ENCODE measurements at regions of chr14 and their contacts with region 1.

Region 1: GRCh38 chr14:32076278-32077080 is 625 bp upstream of the ARHGAP5 start:
- DNase-seq: peak; percentile 73
- ATAC-seq: peak; percentile 91
- H3K4me3 ChIP-seq: peak overlapping the region; percentile 79 to 91
- H3K27ac ChIP-seq: peak overlapping the region; percentile 97
- H3K4me1 ChIP-seq: peaks cover 12% of the 10 kb centered on the region; the same call in 1 of the 2 replicates
- H3K27me3 ChIP-seq: no peaks in the 10 kb centered on the region
- CTCF ChIP-seq: no peak

Region 2: DNA sequence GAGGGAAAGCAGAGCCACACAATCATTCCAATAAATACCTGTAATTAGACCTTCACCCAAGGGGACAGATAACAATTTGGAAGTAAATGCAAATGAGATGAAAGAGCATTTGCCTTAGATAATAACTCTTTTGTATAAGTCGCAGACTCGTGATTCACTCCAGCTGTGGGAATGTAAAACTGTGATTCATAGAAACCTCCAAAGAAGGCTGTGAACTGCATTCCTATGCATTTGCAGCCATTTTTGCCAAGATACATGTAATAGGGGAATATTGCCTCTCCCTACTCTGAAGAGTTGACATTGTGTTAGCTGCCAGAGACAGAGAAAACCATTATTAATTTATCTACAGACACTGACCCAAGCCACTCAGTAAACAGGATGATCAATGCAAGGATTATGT is 181.3 kb before region 1 on chr14:
- CTCF ChIA-PET with region 1: no interaction called
- POLR2A ChIA-PET with region 1: no interaction called
- in situ Hi-C with region 1: no loop called
- intact Hi-C with region 1: no loop called
- DNase-seq: no peak
- ATAC-seq: no peak
- H3K4me3 ChIP-seq: no peak overlapping the region
- H3K27ac ChIP-seq: no peak overlapping the region
- H3K4me1 ChIP-seq: no peaks in the 10 kb centered on the region
- H3K27me3 ChIP-seq: no peaks in the 10 kb centered on the region
- CTCF ChIP-seq: no peak

Region 3: GRCh38 chr14:31937721-31938346 is 138.6 kb before region 1 on chr14:
- CTCF ChIA-PET with region 1: interaction called, 3 read pairs
- POLR2A ChIA-PET with region 1: no interaction called
- in situ Hi-C with region 1: no loop called
- intact Hi-C with region 1: loop called (anchors 10 kb)
- DNase-seq: peak; percentile 89
- ATAC-seq: peak; percentile 98
- H3K4me3 ChIP-seq: no peak overlapping the region
- H3K27ac ChIP-seq: no peak overlapping the region
- H3K4me1 ChIP-seq: no peaks in the 10 kb centered on the region
- H3K27me3 ChIP-seq: no peaks in the 10 kb centered on the region
- CTCF ChIP-seq: no peak

Region 4: DNA sequence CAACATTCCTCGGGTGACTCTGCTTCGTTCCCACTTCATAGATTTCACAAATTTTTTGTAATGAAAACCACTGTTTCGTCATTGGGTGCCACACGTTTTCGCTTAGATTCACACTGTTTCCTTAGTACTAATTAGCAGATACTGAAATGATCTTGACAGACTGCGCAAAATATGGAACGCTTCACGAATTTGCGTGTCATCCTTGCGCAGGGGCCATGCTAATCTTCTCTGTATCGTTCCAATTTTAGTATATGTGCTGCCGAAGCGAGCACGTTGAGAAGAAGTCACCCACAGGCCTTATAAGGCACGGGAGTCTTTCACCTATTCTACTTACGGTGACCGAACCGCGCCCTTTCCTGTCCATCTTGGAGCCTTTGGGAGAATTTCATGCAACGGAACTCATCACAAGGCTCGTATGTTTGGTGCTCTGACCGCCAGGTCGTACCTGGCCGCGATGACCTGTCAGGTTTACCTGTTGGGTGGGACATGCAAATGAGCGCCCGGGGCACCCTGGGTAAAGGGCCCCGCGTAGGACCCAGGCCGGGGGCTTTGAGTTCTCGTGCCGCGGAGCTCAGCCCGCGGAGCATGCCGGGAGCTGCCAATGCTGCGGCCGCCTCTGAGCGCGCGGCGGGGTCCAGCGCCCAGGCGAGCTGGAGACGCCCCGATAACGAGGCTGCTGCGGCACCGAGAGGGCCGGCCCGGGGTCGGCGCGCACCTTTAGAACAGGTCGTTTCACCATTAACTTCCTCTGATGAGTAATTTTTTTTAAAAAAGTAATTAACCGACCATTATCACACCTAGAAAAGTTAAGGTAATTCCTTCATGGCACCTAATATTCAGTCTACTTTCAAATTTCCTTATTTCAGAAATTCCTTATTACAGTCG is 126.8 kb after region 1 on chr14 and contains the start of gene RNU6-8:
- CTCF ChIA-PET with region 1: no interaction called
- POLR2A ChIA-PET with region 1: no interaction called
- in situ Hi-C with region 1: no loop called
- intact Hi-C with region 1: loop called (anchors 10 kb)
- DNase-seq: peak; percentile 78
- ATAC-seq: peak; percentile 90
- H3K4me3 ChIP-seq: peak within 1 kb of the TSS; percentile 64 to 85
- H3K27ac ChIP-seq: peak within 1 kb of the TSS; percentile 91
- H3K4me1 ChIP-seq: peaks cover 3% of the 10 kb centered on the region
- H3K27me3 ChIP-seq: no peaks in the 10 kb centered on the region
- CTCF ChIP-seq: no peak
- total RNA-seq, gene RNU6-8: not detected

Region 5: GRCh38 chr14:32252030-32252670 is 175.7 kb after region 1 on chr14:
- CTCF ChIA-PET with region 1: interaction called, 4 read pairs
- POLR2A ChIA-PET with region 1: no interaction called
- in situ Hi-C with region 1: no loop called
- intact Hi-C with region 1: loop called (anchors 1 kb)
- DNase-seq: peak; percentile 51
- ATAC-seq: peak; percentile 93
- H3K4me3 ChIP-seq: no peak overlapping the region
- H3K27ac ChIP-seq: no peak overlapping the region
- H3K4me1 ChIP-seq: no peaks in the 10 kb centered on the region
- H3K27me3 ChIP-seq: no peaks in the 10 kb centered on the region
- CTCF ChIP-seq: peak; percentile 84

Region 6: DNA sequence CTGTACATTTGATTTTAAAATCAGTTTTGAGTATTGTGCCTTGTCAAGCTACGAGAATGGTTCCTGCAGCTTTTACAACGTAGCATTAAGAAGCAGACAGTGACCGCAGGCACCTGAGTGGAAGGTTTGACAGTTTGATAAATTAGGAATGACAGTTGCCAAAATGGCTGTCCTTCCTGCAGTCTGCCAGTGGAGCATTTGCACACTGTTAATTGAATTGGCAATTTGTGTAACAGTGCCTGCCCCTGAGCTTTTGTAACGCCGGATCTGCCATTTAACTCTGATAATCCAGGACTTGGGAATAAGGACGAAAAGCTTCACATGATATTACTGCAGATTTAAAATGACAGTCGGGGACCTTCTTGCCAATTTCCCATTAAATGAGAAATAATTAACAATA is 1247.5 kb after region 1 on chr14:
- CTCF ChIA-PET with region 1: no interaction called
- POLR2A ChIA-PET with region 1: interaction called, 19 read pairs
- in situ Hi-C with region 1: no loop called
- intact Hi-C with region 1: no loop called
- DNase-seq: no peak
- ATAC-seq: no peak
- H3K4me3 ChIP-seq: no peak overlapping the region
- H3K27ac ChIP-seq: no peak overlapping the region
- H3K4me1 ChIP-seq: no peaks in the 10 kb centered on the region
- H3K27me3 ChIP-seq: no peaks in the 10 kb centered on the region
- CTCF ChIP-seq: no peak